Activated naive CD4-positive, alpha-beta T cell treated with anti-CD3 and anti-CD28 coated beads for 36 hours (primary cell): ENCODE measurements at regions of chr3 and their contacts with region 1.

Region 1: GRCh38 chr3:112561731-112562688 is at the starts of genes ATG3 and SLC35A5:
- DNase-seq: peak; percentile 99
- H3K4me3 Mint-ChIP-seq: peak within 1 kb of the TSS; percentile 90
- H3K27ac Mint-ChIP-seq: peak within 1 kb of the TSS; percentile 98
- H3K4me1 Mint-ChIP-seq: peaks cover 29% of the 10 kb centered on the region
- H3K27me3 Mint-ChIP-seq: no peaks in the 10 kb centered on the region
- total RNA-seq, gene ATG3: 49.2 to 50.4 TPM
- total RNA-seq, gene SLC35A5: 15.7 to 16.0 TPM

Region 2: DNA sequence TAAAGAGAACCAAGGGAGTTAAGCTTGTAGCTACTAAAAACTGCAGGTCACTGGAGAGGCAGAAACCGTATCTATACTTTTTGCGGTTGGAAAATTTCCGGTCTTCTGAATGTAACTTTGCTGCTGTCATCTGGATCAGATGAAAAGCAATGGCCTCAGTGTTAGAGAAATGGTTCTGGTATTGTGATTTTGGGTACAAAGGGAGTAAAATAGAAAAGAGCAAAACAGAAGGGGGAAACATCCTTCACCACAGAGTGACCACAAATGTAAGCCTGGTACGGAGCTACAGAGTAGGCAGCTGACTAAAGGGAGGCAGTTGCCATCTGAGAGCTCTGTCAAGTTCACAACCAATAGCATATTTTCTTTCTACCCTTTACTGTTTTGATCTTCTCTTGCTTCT is 1014.4 kb before region 1 on chr3:
- CTCF ChIA-PET with region 1: no interaction called
- intact Hi-C with region 1: loop called (anchors 5 kb)
- DNase-seq: peak; percentile 74
- H3K4me3 Mint-ChIP-seq: no peak overlapping the region
- H3K27ac Mint-ChIP-seq: no peak overlapping the region
- H3K4me1 Mint-ChIP-seq: peaks cover 39% of the 10 kb centered on the region
- H3K27me3 Mint-ChIP-seq: no peaks in the 10 kb centered on the region

Region 3: DNA sequence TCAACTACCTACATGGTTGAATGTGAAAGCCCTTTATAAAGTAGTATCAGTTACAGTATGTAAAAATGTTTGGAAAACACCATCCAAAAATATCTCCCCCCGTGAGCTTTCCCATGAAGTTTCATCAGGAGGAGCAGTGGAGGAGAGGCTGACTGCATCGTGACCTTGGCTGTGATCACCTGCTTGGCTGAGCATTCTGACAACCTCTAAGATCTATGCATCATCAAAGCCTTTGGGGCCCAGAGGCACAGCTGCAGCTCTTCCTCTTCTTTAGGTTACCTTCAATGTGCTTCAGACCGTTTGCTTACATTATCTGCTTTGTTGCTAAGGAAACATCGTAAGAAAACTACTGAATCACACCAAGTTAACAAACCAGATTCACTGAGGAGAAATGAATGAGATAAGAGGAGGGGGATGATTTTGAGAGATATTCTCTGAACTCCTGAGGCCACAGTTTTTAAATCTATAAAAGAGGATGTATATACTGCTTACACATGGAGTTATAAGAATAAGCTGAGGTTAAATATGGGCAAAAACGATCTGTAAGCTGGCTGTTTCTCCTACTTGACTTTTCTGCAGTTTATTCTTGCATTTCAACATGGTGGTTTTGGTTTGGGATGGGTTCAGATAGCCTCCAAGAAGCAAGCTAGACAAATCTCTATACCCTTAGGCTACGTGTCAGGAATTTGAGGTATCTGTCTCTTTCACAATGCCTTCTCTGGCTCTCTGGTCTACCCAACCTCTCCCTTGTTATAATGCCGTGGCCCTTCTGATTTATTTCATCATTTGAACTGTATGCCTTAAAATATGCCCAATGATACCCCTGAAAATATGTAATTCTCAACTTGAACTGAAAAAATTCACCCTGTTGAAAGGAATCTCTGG is 432.9 kb before region 1 on chr3:
- CTCF ChIA-PET with region 1: no interaction called
- intact Hi-C with region 1: loop called (anchors 1 kb)
- DNase-seq: peak; percentile 82
- H3K4me3 Mint-ChIP-seq: peak overlapping the region; percentile 4
- H3K27ac Mint-ChIP-seq: peak overlapping the region; percentile 76
- H3K4me1 Mint-ChIP-seq: peaks cover 74% of the 10 kb centered on the region
- H3K27me3 Mint-ChIP-seq: no peaks in the 10 kb centered on the region

Region 4: DNA sequence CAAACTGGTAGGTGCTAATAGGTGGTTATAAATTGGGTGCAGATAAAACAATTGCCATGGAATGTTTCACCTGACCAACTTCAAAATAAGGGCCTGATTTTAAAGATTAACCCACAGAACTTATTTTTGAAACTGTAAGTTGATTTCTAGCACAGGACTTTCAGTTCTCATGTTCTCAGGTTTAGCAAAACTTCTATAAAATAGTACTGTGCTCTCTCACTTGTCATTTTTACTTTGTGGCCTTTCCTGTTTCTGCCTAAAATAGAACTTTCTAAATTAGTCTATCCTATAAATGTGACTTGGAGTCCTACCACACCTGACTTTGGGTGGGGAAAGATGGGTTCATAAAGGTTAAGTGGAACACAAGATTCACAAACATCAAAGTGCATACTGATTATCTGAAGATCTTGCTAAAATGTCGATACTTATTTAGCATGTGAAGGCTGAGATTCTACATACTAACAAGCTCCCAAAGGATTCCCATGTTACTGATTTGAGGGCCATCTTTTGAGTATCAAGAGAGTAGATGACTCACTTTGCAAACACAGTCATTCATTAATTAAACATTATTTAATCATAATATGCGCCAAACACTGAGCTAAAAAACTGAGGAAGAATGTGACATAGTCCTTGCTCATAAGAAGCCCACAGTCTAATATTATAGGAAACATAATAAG is 101.4 kb before region 1 on chr3:
- CTCF ChIA-PET with region 1: no interaction called
- intact Hi-C with region 1: loop called (anchors 2 kb)
- DNase-seq: no peak
- H3K4me3 Mint-ChIP-seq: no peak overlapping the region
- H3K27ac Mint-ChIP-seq: peak overlapping the region; percentile 79
- H3K4me1 Mint-ChIP-seq: peaks cover 60% of the 10 kb centered on the region
- H3K27me3 Mint-ChIP-seq: no peaks in the 10 kb centered on the region

Region 5: DNA sequence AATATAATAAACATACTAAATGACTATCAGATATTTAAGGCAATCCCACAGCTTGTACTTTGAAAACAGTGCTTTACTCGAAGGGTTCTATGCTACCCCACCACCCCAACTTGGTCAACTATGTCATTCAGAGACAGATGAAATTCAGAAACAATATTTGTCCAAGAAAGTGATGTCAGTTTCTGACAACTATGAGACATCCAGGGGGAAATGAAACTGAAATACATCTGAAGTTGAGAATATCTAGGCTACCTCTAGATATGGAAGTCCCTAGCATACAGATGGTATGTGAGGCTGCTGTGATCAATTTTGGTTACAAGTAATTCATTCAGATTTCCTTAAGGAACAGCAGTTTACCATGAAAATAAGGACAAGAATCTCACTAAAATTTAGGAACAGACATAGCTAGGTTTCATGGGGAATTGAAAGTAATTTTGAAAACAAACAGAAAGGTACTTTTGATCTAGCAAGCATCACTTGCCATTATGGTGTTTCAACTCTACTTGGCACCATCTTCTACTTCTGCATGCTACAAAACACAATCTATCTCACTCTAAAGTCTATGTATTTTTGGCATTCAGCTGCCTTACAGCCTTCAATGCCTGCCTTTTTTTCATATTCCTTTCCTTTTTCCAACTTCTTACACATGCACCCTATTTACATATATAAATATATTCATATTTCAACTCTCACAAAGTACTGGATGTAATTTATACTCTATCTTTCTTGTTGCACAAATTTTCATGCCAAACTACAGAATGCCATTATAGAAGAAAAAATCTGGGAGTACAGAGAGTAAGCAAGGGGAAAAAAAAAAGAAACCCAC is 22.0 kb before region 1 on chr3:
- CTCF ChIA-PET with region 1: interaction called, 3 read pairs
- intact Hi-C with region 1: loop called (anchors 2 kb)
- DNase-seq: no peak
- H3K4me3 Mint-ChIP-seq: no peak overlapping the region
- H3K27ac Mint-ChIP-seq: peak overlapping the region; percentile 72
- H3K4me1 Mint-ChIP-seq: peaks cover 34% of the 10 kb centered on the region
- H3K27me3 Mint-ChIP-seq: no peaks in the 10 kb centered on the region

Region 6: GRCh38 chr3:112973325-112974177 is 411.5 kb after region 1 on chr3:
- CTCF ChIA-PET with region 1: no interaction called
- intact Hi-C with region 1: loop called (anchors 1 kb)
- DNase-seq: peak; percentile 66
- H3K4me3 Mint-ChIP-seq: peak overlapping the region; percentile 70
- H3K27ac Mint-ChIP-seq: peak overlapping the region; percentile 52
- H3K4me1 Mint-ChIP-seq: peaks cover 82% of the 10 kb centered on the region
- H3K27me3 Mint-ChIP-seq: no peaks in the 10 kb centered on the region

Region 7: GRCh38 chr3:113019182-113020137 is 457.4 kb after region 1 on chr3:
- CTCF ChIA-PET with region 1: no interaction called
- intact Hi-C with region 1: loop called (anchors 1 kb)
- DNase-seq: peak; percentile 94
- H3K4me3 Mint-ChIP-seq: peak overlapping the region; percentile 94
- H3K27ac Mint-ChIP-seq: peak overlapping the region; percentile 99
- H3K4me1 Mint-ChIP-seq: peaks cover 64% of the 10 kb centered on the region
- H3K27me3 Mint-ChIP-seq: no peaks in the 10 kb centered on the region